T-cell (primary cell): ENCODE measurements at regions of chr3 and their contacts with region 1.

Region 1: DNA sequence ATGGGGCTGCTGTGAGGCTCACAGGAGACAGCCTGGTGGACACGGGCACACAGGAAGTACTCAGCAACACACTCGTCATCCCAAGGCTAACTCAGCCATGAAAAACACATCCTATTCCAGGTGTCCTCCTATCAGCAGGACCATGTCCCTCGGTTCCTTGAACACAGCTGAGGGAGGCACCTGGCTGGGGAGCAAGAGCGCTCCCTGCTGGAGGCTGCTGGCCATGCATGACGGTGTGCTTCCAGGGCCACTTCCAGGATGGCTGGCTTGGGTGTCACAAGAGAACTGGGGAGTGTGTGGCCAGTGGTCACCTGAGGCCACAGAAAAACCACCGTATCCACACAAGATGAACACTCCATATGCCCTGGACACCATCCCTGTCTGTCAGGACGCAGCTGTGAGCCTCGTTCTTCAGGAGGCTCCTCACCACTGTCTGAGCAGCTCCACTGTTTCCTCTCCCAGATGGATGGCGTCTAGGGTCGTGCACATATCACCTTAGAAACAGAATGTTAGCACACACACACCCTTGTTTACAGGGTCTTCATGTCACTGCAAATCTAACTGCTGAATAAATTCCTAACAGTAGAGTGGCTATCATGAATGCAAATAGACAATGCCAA is 31.0 kb downstream of the POC1A start:
- DNase-seq: peak; percentile 43 to 88 (median 67)
- ATAC-seq: peak; percentile 88 to 92 (median 90)
- H3K4me3 ChIP-seq: no peak overlapping the region
- H3K4me3 Mint-ChIP-seq: no peak overlapping the region
- H3K27ac ChIP-seq: no peak overlapping the region
- H3K27ac Mint-ChIP-seq: no peak overlapping the region
- H3K4me1 ChIP-seq: peaks cover 3 to 8% of the 10 kb centered on the region in 2 experiments
- H3K4me1 Mint-ChIP-seq: peaks cover 0 to 9% (median 1%) of the 10 kb centered on the region in 3 donors
- H3K27me3 ChIP-seq: no peaks in the 10 kb centered on the region
- H3K27me3 Mint-ChIP-seq: no peaks in the 10 kb centered on the region

Region 2: GRCh38 chr3:52001443-52001974 is 121.7 kb before region 1 on chr3:
- CTCF ChIA-PET with region 1: interaction called, 4 to 10 read pairs
- POLR2A ChIA-PET with region 1: no interaction called
- DNase-seq: peak; percentile 69 to 93 (median 83)
- ATAC-seq: peak; percentile 92 to 99 (median 96)
- H3K4me3 ChIP-seq: no peak overlapping the region
- H3K4me3 Mint-ChIP-seq: no peak overlapping the region
- H3K27ac ChIP-seq: no peak overlapping the region
- H3K27ac Mint-ChIP-seq: no peak overlapping the region
- H3K4me1 ChIP-seq: peaks cover 2 to 26% of the 10 kb centered on the region in 2 experiments
- H3K4me1 Mint-ChIP-seq: peaks cover 17 to 24% (median 19%) of the 10 kb centered on the region in 3 donors
- H3K27me3 ChIP-seq: peaks cover 0 to 16% of the 10 kb centered on the region in 2 experiments
- H3K27me3 Mint-ChIP-seq: no peaks in the 10 kb centered on the region

Region 3: DNA sequence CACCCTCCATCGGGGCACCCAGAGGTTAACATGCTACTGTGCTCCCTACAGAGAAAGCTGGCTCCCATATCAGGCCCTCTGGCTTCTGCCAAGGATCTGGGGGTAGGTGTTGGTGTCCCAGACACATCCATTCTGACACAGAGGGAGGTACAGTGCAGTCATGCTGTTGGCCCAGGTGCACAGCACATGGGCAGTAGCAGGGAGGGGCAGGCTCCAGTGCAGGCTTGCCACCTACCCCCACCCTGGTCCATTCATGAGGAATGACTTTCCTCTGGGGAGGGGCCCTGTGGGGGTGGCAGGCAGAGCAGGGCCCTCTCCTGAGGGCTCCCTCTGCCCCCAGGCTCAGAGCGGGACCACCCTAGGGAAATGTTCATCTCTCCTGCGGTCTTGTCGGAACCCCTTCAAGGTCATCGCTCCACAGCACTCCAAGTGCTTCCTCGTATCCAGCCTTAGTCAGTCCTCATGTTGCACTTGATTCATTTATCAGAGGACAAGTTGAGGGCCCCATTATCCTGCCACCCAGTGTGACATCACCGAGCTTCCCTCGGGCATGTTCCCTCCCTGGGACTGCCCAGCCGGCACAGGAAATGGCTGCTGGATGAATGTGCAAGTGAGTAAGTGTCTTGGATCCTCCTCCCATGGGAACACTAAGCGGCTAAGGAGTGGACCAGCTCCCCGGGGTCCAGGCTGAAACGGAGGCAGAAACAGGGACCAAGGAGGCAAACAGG is 76.9 kb before region 1 on chr3:
- CTCF ChIA-PET with region 1: no interaction called
- POLR2A ChIA-PET with region 1: no interaction called
- DNase-seq: no peak
- ATAC-seq: no peak
- H3K4me3 ChIP-seq: no peak overlapping the region
- H3K4me3 Mint-ChIP-seq: no peak overlapping the region
- H3K27ac ChIP-seq: peak overlapping the region; percentile 29
- H3K27ac Mint-ChIP-seq: peak overlapping the region; percentile 72 to 84
- H3K4me1 ChIP-seq: peaks cover 3 to 59% of the 10 kb centered on the region in 2 experiments
- H3K4me1 Mint-ChIP-seq: peaks cover 41 to 58% (median 55%) of the 10 kb centered on the region in 3 donors
- H3K27me3 ChIP-seq: no peaks in the 10 kb centered on the region
- H3K27me3 Mint-ChIP-seq: no peaks in the 10 kb centered on the region